Left colon (tissue), 2 donors: ENCODE measurements at regions of chr7 and their contacts with region 1.

Region 1: GRCh38 chr7:138014686-138015085 is 12.8 kb upstream of the CREB3L2 start:
- DNase-seq: no peak
- ATAC-seq: no peak

Region 2: GRCh38 chr7:137656227-137656849 is 358.3 kb before region 1 on chr7:
- intact Hi-C with region 1: loop called in 1 of 2 experiments (anchors 5 kb)
- DNase-seq: peak; percentile 65 to 84
- ATAC-seq: peak; percentile 76